ENCODE measurements at regions of chr19 and their contacts with region 1.

Region 1: DNA sequence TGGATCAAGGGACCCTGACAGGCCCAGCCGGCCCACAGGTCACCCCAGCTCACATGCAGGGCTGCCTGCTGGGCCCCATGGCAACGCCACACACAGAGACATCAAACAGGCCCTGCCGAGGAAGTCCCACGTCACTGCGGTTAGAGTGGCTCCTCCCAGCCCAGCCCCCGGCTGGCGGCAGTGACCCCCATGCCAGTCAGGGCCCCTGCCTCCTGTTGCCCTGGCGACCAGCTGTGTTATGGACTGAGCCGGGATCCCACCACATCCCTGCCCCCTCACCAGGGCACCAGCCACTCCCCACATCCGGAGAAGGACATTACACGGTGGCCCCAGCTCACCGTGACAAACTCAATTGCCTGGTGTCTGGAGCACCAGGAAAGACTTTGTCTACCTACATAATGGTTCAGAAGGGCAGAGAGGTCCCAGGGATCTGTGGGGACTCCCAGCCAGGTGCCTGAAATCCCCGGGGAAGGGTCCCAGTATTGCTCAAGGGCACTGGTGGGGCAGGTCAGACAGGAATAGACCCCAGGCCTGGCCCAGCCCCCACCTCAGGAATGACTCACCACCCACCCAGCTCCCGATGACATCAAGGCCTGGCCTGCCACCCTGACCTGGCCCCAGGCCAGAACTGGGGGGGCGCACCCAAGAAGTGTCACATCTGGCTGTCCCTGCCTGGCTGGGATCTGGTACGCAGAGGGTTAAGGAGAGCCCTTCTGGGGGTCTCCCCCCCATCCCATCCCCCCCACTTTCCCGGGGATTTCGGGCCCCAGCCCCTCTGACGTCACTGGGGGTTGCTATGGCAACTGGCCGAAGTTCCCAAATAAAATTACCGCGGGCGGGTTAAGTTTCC is 30.2 kb upstream of the NANOS3 start:
- DNase-seq: peak; percentile 95
- H3K4me3 ChIP-seq: peak overlapping the region; percentile 47 to 60 (median 54)
- H3K27ac ChIP-seq: peak overlapping the region; percentile 96 to 100 (median 99)
- H3K4me1 ChIP-seq: peaks cover 0 to 75% (median 64%) of the 10 kb centered on the region in 4 donors
- H3K27me3 ChIP-seq: no peaks in the 10 kb centered on the region
- CTCF ChIP-seq: no peak
- EP300 ChIP-seq: peak; percentile 5 to 80 (median 55)
- POLR2A ChIP-seq: no peak

Region 2: GRCh38 chr19:12789904-12790619 is 1056.7 kb before region 1 on chr19:
- intact Hi-C with region 1: loop called (anchors 5 kb)
- DNase-seq: peak; percentile 99
- H3K4me3 ChIP-seq: peak overlapping the region; percentile 72 to 99 (median 90)
- H3K27ac ChIP-seq: peak overlapping the region; percentile 97 to 100 (median 98)
- H3K4me1 ChIP-seq: peaks cover 0 to 58% (median 55%) of the 10 kb centered on the region in 4 donors
- H3K27me3 ChIP-seq: no peaks in the 10 kb centered on the region
- CTCF ChIP-seq: no peak
- EP300 ChIP-seq: peak in 2 of 4 donors; percentile 56 to 84
- POLR2A ChIP-seq: peak; percentile 96 to 97

Region 3: DNA sequence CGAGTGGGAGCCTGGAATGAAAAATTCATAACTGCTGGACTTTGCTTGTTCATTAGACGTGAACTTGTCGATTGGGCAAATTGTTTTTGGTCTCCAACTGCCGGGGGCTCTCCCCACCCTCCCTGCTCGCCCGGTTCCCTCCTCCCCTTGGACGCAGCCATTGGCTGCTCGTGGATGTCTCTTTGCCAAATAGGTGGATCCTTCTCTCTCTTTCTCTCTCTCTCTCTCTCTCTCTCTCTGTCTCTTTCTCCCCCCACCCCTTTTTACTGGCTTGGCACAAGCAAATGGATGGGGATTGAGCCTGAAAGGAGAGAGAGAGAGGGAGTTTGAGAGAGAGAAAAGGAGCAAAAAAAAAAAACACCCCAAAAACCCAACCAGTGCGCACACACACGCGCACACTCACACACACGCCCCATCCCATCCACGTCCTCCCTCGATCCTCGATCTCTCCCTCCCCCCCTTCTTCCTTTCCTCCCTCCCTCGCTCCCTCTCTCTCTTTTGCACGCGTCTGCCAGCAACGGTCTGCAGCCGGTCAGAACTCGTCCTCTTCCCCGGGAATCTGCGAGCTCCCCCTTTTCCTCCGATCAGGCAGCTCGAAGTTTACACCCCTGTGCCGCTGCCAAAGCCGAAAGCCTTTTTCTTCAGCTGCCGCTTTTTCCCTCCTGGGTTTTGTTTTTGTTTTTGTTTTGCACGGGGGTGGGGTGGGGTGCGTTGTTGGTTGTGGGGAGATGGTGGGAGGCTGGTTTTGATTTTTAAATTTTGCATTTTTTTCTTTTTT is 823.7 kb before region 1 on chr19:
- intact Hi-C with region 1: loop called (anchors 10 kb)
- DNase-seq: peak; percentile 97
- H3K4me3 ChIP-seq: peak overlapping the region; percentile 31 to 49 (median 41)
- H3K27ac ChIP-seq: peak overlapping the region; percentile 91 to 98 (median 95)
- H3K4me1 ChIP-seq: peaks cover 0 to 97% (median 89%) of the 10 kb centered on the region in 4 donors
- H3K27me3 ChIP-seq: no peaks in the 10 kb centered on the region
- CTCF ChIP-seq: peak in 2 of 4 experiments; percentile 17 to 24
- EP300 ChIP-seq: peak in 1 of 4 donors; percentile 35
- POLR2A ChIP-seq: no peak

Region 4: GRCh38 chr19:13162518-13163314 is 684.1 kb before region 1 on chr19:
- intact Hi-C with region 1: loop called (anchors 5 kb)
- DNase-seq: peak; percentile 99
- H3K4me3 ChIP-seq: peak overlapping the region; percentile 25 to 47 (median 44)
- H3K27ac ChIP-seq: peak overlapping the region; percentile 91 to 94 (median 94)
- H3K4me1 ChIP-seq: peaks cover 0 to 41% (median 35%) of the 10 kb centered on the region in 4 donors
- H3K27me3 ChIP-seq: no peaks in the 10 kb centered on the region
- CTCF ChIP-seq: no peak
- EP300 ChIP-seq: peak in 1 of 4 donors; percentile 71
- POLR2A ChIP-seq: peak in 1 of 2 donors; percentile 64

Region 5: DNA sequence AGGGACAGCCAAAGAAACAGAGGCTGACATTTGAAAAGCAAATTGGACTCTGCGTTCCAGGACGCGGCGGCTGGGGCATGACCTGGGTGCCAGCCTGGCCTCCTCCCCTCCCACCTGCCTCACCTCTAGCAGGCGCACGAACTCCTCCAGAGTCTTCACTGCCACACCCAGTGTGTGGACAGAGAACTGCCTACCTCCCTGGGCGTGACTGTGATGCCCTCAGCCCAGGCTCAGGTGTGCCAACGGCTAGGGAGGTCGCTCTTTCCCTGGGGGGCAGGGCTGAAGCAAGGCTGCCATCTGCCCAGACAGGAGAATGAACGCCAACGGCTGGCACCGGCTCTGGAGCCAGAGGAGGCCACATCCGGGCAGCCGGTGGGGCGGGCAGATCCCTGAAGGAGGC is 41.5 kb after region 1 on chr19:
- intact Hi-C with region 1: no loop called
- DNase-seq: no peak
- H3K4me3 ChIP-seq: no peak overlapping the region
- H3K27ac ChIP-seq: no peak overlapping the region
- H3K4me1 ChIP-seq: no peaks in the 10 kb centered on the region
- H3K27me3 ChIP-seq: no peaks in the 10 kb centered on the region
- CTCF ChIP-seq: no peak
- EP300 ChIP-seq: no peak
- POLR2A ChIP-seq: no peak